IMR-90 (cell line): ENCODE measurements at regions of chr13 and their contacts with region 1.

Region 1: DNA sequence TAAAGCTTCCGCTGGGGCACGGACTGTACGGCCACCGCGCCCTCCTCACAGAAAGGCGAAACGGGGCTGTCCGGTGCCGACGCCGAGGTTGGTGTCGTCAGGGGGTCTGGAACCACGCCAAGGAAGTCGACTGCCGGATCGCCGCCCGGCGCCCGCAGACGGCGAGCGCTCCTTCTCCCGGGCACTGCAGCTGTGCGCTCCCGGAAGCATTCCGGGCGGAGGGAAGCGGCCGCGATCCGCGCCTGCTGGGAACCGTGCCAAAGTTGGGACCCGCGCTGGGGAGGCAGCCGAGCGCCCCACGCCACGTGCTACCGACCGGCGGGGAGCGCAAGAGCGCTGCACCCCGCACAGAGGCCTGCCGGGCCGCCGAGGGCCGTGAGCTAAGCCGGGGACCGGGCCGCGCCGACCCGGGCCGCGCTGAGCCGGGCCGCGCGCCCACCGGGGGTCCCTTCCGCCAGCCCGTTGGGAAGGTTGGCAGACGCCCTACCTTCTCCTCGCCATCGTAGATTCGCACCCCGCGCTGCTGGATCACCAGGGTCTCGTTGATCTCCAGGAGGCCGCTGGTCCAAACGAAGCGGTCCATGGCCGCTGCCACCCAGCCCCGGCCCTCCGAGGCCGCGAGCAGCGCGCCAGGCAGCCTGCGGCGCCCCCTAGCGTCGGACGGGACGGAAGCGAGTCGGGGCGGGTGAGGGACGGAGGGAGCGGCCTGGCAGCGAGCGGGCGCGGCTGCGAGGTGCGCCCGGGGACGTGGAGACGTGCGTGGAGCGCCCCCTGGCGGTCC is at the start of gene VPS36:
- DNase-seq: peak; percentile 92
- ATAC-seq: peak; percentile 86
- H3K4me3 ChIP-seq: peak within 1 kb of the TSS; percentile 73
- H3K27ac ChIP-seq: peak within 1 kb of the TSS; percentile 83
- H3K4me1 ChIP-seq: peaks cover 7% of the 10 kb centered on the region
- H3K27me3 ChIP-seq: no peaks in the 10 kb centered on the region
- CTCF ChIP-seq: peak; percentile 99
- POLR2A ChIP-seq: peak; percentile 85
- RAD21 ChIP-seq: peak; percentile 86
- total RNA-seq, gene VPS36: 16.7 and 23.1 TPM in 2 replicates

Region 2: GRCh38 chr13:51895906-51896888 is 554.0 kb before region 1 on chr13:
- CTCF ChIA-PET with region 1: interaction called, 5 read pairs
- POLR2A ChIA-PET with region 1: no interaction called
- dilution Hi-C with region 1: no loop called
- in situ Hi-C with region 1: no loop called
- intact Hi-C with region 1: loop called (anchors 5 kb)
- DNase-seq: peak; percentile 61
- ATAC-seq: peak; percentile 96
- H3K4me3 ChIP-seq: no peak overlapping the region
- H3K27ac ChIP-seq: no peak overlapping the region
- H3K4me1 ChIP-seq: no peaks in the 10 kb centered on the region
- H3K27me3 ChIP-seq: peaks cover 24% of the 10 kb centered on the region
- CTCF ChIP-seq: peak; percentile 81
- POLR2A ChIP-seq: no peak
- RAD21 ChIP-seq: peak; percentile 75

Region 3: GRCh38 chr13:52011632-52012511 is 438.3 kb before region 1 on chr13 and contains the start of gene ALG11:
- CTCF ChIA-PET with region 1: interaction called, 3 read pairs
- POLR2A ChIA-PET with region 1: no interaction called
- dilution Hi-C with region 1: no loop called
- in situ Hi-C with region 1: loop called (anchors 25 kb)
- intact Hi-C with region 1: loop called (anchors 5 kb)
- DNase-seq: peak; percentile 97
- ATAC-seq: peak; percentile 99
- H3K4me3 ChIP-seq: peak within 1 kb of the TSS; percentile 92
- H3K27ac ChIP-seq: peak within 1 kb of the TSS; percentile 62
- H3K4me1 ChIP-seq: no peaks in the 10 kb centered on the region
- H3K27me3 ChIP-seq: peaks cover 10% of the 10 kb centered on the region
- CTCF ChIP-seq: no peak
- POLR2A ChIP-seq: peak; percentile 86
- RAD21 ChIP-seq: no peak
- total RNA-seq, gene ALG11: 12.7 and 25.6 TPM in 2 replicates

Region 4: DNA sequence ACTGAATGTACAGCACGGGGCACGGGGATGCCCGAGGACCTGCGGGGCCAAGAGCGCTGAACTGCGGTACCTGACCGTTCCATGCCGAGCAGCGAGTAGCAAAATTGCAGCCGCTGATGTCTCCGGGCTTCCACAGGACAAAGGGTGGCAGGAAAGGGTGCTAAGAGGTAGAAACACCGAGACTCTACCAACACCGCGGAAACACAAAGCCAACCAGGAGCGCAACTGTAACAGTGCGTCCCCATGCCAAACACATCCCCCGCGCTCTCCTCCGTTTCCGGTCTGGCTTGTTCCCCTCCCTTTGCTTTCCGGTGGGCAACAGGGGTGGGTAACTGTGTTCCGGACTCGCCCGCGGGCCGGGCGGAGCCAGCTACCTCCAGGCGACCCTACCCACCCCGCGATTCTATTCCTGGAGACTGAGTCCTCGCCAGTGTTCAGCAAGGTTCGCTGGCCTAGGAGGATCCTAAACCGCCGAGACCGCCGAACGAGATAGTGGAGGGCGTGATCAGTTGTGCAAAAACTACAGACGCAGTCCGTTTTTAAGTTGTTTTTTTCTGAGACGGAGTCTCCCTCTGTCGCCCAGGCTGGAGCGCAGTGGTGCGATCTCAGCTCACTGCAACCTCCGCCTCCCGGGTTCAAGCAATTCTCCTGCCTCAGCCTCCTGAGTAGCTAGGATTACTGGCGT is 255.9 kb before region 1 on chr13:
- CTCF ChIA-PET with region 1: interaction called, 3 read pairs
- POLR2A ChIA-PET with region 1: no interaction called
- dilution Hi-C with region 1: no loop called
- in situ Hi-C with region 1: loop called (anchors 10 kb)
- intact Hi-C with region 1: loop called (anchors 2 kb)
- DNase-seq: peak; percentile 83
- ATAC-seq: peak; percentile 98
- H3K4me3 ChIP-seq: peak overlapping the region; percentile 95
- H3K27ac ChIP-seq: peak overlapping the region; percentile 85
- H3K4me1 ChIP-seq: no peaks in the 10 kb centered on the region; the same call in 1 of the 2 replicates
- H3K27me3 ChIP-seq: no peaks in the 10 kb centered on the region
- CTCF ChIP-seq: no peak
- POLR2A ChIP-seq: peak; percentile 58; the same call in 1 of the 2 replicates
- RAD21 ChIP-seq: peak; percentile 10; the same call in 1 of the 2 replicates

Region 5: GRCh38 chr13:52348983-52349780 is 101.0 kb before region 1 on chr13:
- CTCF ChIA-PET with region 1: interaction called, 5 read pairs
- POLR2A ChIA-PET with region 1: no interaction called
- dilution Hi-C with region 1: no loop called
- in situ Hi-C with region 1: no loop called
- intact Hi-C with region 1: loop called (anchors 5 kb)
- DNase-seq: peak; percentile 85
- ATAC-seq: no peak
- H3K4me3 ChIP-seq: no peak overlapping the region
- H3K27ac ChIP-seq: no peak overlapping the region
- H3K4me1 ChIP-seq: peaks cover 2% of the 10 kb centered on the region
- H3K27me3 ChIP-seq: no peaks in the 10 kb centered on the region
- CTCF ChIP-seq: no peak
- POLR2A ChIP-seq: no peak
- RAD21 ChIP-seq: no peak

Region 6: GRCh38 chr13:52432456-52432855 is 17.7 kb before region 1 on chr13:
- CTCF ChIA-PET with region 1: interaction called, 4 read pairs
- POLR2A ChIA-PET with region 1: no interaction called
- dilution Hi-C with region 1: no loop called
- in situ Hi-C with region 1: no loop called
- intact Hi-C with region 1: loop called (anchors 2 kb)
- DNase-seq: no peak
- ATAC-seq: no peak
- H3K4me3 ChIP-seq: no peak overlapping the region
- H3K27ac ChIP-seq: no peak overlapping the region
- H3K4me1 ChIP-seq: peaks cover 3% of the 10 kb centered on the region; the same call in 1 of the 2 replicates
- H3K27me3 ChIP-seq: no peaks in the 10 kb centered on the region
- CTCF ChIP-seq: no peak
- POLR2A ChIP-seq: no peak
- RAD21 ChIP-seq: no peak

Region 7: DNA sequence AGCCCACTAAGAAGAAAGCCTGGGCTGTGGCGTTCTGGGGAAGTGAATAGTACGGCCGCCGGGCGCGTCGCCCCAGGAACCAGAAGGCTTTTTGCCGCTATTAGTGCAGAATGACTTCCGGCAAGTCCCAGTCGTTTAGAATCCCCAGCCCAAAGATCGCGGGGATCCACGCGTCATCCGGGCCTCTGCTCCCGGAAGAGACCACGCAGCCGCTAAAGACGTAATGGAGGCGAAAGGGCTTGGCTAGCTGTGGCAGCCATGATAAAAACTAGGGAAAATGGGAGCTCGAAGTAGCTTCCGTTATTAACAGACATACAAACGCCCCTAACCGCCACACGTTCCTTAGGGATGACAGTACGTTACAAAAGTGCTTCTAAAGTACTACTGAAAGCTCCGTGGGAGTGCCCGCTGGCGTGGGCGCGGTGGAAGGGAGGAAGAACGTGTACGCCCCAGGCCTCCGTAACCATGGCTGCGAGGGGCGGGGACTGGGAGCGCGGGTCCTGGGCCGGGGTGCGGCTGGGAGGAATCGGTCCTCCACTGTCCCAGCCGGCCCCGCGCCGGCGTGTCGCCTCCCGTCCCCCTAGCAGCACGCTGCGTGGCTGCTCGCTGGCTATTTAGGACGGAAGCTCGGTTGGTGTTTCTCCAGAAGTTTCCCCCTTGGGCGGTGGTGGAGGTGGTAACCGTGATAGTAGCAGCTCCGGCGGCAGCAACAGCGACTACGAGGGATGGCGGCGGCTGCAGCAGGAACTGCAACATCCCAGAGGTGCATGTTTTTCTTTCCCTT is 202.2 kb after region 1 on chr13 and contains the start of gene SUGT1:
- CTCF ChIA-PET with region 1: no interaction called
- POLR2A ChIA-PET with region 1: no interaction called
- dilution Hi-C with region 1: no loop called
- in situ Hi-C with region 1: loop called (anchors 10 kb)
- intact Hi-C with region 1: loop called (anchors 5 kb)
- DNase-seq: peak; percentile 97
- ATAC-seq: peak; percentile 97
- H3K4me3 ChIP-seq: peak within 1 kb of the TSS; percentile 93
- H3K27ac ChIP-seq: peak within 1 kb of the TSS; percentile 96
- H3K4me1 ChIP-seq: peaks cover 2% of the 10 kb centered on the region; the same call in 1 of the 2 replicates
- H3K27me3 ChIP-seq: no peaks in the 10 kb centered on the region
- CTCF ChIP-seq: peak; percentile 68
- POLR2A ChIP-seq: peak; percentile 91
- RAD21 ChIP-seq: peak; percentile 42
- total RNA-seq, gene SUGT1: 21.5 and 41.4 TPM in 2 replicates